ENCODE measurements at regions of chr6 and their contacts with region 1.

Region 1: DNA sequence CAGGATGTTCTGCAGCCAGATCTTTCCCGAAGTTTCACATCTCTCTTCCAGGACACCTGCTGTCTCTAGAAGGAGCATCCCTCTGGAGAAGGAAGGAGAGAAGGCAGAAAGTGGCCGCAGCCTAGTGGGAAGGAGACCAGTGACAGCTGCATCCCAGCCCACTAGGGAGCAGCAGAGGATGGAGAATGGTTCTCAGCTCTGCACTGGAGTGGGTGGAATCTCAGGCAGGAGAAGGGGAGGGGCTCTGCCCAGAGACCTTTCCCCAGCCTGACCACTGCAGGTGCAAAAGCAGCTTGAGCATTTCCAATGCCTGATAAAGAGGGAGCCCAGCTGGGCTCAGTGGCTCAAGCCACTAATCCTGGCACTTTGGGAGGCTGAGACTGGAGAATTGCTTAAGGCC is 32.3 kb downstream of the NCR2 start:
- DNase-seq: no peak
- H3K4me3 ChIP-seq: no peak overlapping the region
- H3K27ac ChIP-seq: no peak overlapping the region
- H3K4me1 ChIP-seq: peaks cover 0 to 24% (median 21%) of the 10 kb centered on the region in 4 donors
- H3K27me3 ChIP-seq: peaks cover 6 to 33% (median 19%) of the 10 kb centered on the region in 3 donors
- CTCF ChIP-seq: peak in 3 of 4 experiments; percentile 36 to 47 (median 37)
- EP300 ChIP-seq: no peak
- POLR2A ChIP-seq: no peak

Region 2: DNA sequence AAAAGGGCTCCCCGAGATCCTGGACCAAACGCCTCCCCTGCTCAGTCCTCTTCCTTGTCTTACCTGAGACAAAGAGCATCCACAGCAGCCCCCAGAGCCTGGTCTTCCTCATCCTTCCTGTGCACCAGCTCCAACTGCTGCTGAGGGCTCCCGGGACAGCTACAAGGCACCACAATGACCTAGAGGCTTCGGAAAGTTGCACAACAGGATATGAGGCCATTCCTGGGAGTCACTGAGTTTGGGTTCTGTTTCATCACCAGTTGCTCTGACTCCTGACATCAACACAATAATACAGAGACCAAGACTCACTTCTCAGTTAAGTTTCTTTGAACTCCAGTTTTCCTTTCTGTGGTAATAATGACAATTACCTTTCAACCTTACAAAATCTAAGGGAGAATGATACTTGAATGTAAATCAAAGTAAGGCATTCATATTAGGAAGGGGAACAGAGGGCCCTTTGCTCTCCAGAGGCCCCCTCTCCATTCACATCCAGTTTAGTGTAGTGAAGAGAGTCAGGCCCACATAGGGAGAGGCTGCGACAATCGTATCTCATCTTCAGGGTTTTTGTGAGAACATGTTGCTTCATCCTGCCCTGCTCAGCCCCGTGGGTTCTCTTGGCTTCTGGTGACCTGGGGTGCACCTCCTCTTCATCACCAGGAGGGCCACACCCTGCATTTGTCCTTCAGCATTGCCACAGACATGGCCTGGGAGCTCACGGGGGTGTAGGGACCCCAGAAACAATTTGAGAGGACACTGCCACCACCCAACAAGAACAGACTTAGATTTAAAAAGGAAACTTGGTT is 81.0 kb before region 1 on chr6 and contains the start of gene TREM1:
- intact Hi-C with region 1: no loop called
- DNase-seq: peak; percentile 68
- H3K4me3 ChIP-seq: no peak within 1 kb of the TSS
- H3K27ac ChIP-seq: peak within 1 kb of the TSS in 1 of 4 donors; percentile 43
- H3K4me1 ChIP-seq: no peaks in the 10 kb centered on the region
- H3K27me3 ChIP-seq: no peaks in the 10 kb centered on the region
- CTCF ChIP-seq: no peak
- EP300 ChIP-seq: peak in 1 of 4 donors; percentile 6
- POLR2A ChIP-seq: no peak
- total RNA-seq, gene TREM1: 0.36 to 3.5 (median 2.0) TPM

Region 3: DNA sequence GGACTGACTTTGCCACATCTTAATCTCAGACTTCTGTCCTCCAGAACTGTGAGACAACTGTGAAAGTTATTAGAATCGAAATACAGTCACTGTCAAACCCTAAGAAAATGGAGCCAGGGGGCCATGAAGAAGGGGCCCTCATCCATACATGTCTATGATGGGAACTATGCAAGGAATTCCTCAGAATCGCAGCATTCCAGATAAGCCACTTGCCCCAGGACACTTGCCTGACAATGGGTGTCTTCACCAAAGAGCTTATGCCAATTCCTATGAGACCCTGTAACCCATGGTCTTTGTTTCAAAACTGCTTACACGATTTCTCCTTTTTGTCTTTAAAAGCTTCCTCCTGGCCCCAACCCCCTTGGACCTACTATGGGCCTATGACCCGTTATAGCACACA is 88.1 kb after region 1 on chr6:
- intact Hi-C with region 1: loop called (anchors 5 kb)
- DNase-seq: no peak
- H3K4me3 ChIP-seq: no peak overlapping the region
- H3K27ac ChIP-seq: no peak overlapping the region
- H3K4me1 ChIP-seq: peaks cover 0 to 46% (median 36%) of the 10 kb centered on the region in 4 donors
- H3K27me3 ChIP-seq: no peaks in the 10 kb centered on the region
- CTCF ChIP-seq: no peak
- EP300 ChIP-seq: no peak
- POLR2A ChIP-seq: no peak

Region 4: DNA sequence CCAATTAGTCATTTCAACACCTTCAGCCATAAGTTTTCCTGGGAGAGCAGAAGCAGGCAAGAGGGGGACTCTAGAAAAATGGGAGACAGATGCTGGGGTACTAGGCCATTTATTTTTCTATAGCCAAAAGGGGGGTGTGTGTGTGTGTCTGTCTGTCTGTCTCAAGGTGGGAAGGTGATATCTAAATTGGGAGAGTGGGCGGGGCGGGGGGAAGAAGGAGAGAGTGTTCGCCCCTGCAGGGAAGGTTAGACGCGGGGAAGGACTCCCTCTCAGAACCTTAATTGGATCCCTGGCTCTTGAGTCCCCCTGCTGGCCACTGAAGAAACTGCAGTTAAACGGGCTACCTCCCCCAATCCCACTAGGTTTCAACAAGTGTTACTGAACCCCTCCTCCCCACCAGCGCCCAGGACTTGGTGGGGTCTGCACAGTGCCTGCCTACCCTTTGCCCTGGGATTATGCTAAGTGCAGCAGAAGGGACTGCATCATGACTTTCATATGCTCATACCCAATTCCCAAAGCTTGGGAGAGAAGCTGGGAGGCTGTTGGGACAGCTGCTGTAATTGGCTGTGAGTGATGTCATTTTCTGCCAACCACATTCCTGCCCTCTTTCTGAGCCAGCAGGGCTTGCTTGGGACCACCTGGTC is 224.3 kb after region 1 on chr6:
- intact Hi-C with region 1: loop called (anchors 1 kb)
- DNase-seq: peak; percentile 86
- H3K4me3 ChIP-seq: no peak overlapping the region
- H3K27ac ChIP-seq: no peak overlapping the region
- H3K4me1 ChIP-seq: no peaks in the 10 kb centered on the region
- H3K27me3 ChIP-seq: no peaks in the 10 kb centered on the region
- CTCF ChIP-seq: peak; percentile 90 to 95 (median 92)
- EP300 ChIP-seq: no peak
- POLR2A ChIP-seq: no peak

Region 5: GRCh38 chr6:41683510-41684310 is 316.0 kb after region 1 on chr6:
- intact Hi-C with region 1: loop called (anchors 1 kb)
- DNase-seq: peak; percentile 90
- H3K4me3 ChIP-seq: peak overlapping the region; percentile 30 to 50 (median 46)
- H3K27ac ChIP-seq: peak overlapping the region; percentile 57 to 70 (median 62)
- H3K4me1 ChIP-seq: peaks cover 0 to 26% (median 22%) of the 10 kb centered on the region in 4 donors
- H3K27me3 ChIP-seq: no peaks in the 10 kb centered on the region
- CTCF ChIP-seq: peak; percentile 83 to 90 (median 89)
- EP300 ChIP-seq: no peak
- POLR2A ChIP-seq: no peak